Caco-2 (cell line): ENCODE measurements at regions of chr11 and their contacts with region 1.

Region 1: GRCh38 chr11:86802601-86803051 is 2.3 kb downstream of the PRSS23 start:
- DNase-seq: peak; percentile 80
- H3K4me3 ChIP-seq: peak overlapping the region; percentile 89
- H3K4me3 Mint-ChIP-seq: peak overlapping the region; percentile 95
- H3K27ac Mint-ChIP-seq: peak overlapping the region; percentile 99
- H3K4me1 ChIP-seq: peaks cover 81% of the 10 kb centered on the region
- H3K4me1 Mint-ChIP-seq: peaks cover 71% of the 10 kb centered on the region
- H3K27me3 ChIP-seq: no peaks in the 10 kb centered on the region
- H3K27me3 Mint-ChIP-seq: no peaks in the 10 kb centered on the region
- CTCF ChIP-seq: peak; percentile 80 to 92

Region 2: DNA sequence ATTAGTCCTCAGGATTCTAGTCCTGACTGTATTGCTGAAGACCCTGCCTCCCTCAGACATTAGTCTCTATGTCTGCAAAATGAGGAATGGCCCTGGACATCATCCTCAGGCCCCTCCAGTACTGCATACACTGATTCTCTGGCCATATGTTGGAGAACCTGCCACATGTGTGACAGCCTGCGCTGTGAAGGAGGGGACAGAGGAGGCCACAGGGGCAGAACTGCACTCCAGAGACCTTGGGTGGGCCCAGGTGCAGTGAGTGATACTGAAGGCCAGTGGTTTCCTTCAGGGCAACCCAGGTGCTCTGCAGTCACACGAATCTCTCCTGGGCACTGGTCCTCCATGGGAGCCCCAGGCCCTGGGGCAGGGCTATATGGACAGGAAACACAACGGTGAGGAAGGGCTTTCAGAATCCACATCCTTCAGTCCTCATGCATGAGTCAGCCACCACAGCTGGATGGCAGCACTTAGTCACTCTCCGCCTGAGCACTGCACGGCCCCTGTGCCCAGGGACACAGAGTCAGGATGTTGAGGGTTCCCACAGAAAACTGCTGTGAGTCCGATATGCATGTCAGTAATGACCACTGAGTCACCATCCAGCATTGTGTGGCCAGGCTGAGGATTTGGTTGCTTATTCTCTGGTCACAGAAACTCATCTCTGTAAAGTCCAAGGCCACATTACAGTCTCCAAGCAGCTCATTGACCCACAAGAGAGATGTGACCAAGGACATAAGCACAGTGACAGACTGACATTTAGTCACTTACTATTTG is 169.9 kb before region 1 on chr11:
- CTCF ChIA-PET with region 1: no interaction called
- POLR2A ChIA-PET with region 1: no interaction called
- intact Hi-C with region 1: loop called (anchors 1 kb)
- DNase-seq: peak; percentile 60 to 69
- H3K4me3 ChIP-seq: no peak overlapping the region
- H3K4me3 Mint-ChIP-seq: no peak overlapping the region
- H3K27ac Mint-ChIP-seq: no peak overlapping the region
- H3K4me1 ChIP-seq: peaks cover 10% of the 10 kb centered on the region
- H3K4me1 Mint-ChIP-seq: no peaks in the 10 kb centered on the region
- H3K27me3 ChIP-seq: no peaks in the 10 kb centered on the region
- H3K27me3 Mint-ChIP-seq: no peaks in the 10 kb centered on the region
- CTCF ChIP-seq: peak; percentile 26 to 51

Region 3: DNA sequence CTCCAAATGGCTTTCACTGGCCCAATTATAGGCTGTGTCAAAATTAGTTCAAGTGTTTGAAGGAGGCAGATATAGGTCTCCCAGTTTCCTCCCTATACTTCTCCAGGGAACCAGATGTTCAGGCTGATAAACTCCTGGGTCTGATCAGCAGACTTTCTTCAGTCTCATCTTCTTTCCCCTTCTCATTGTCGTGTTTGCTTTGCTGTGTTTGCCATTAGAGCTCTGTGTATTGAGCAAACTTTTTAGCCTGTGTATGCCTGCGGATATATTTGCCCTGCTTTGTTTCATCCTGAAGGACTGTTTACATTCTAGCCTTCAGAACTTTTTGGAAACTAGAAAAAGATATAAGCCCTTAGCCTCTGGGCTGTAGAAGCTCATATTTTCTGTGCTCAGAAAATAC is 96.3 kb before region 1 on chr11:
- CTCF ChIA-PET with region 1: interaction called, 9 read pairs
- POLR2A ChIA-PET with region 1: interaction called, 6 read pairs
- intact Hi-C with region 1: loop called (anchors 1 kb)
- DNase-seq: peak; percentile 70 to 74
- H3K4me3 ChIP-seq: no peak overlapping the region
- H3K4me3 Mint-ChIP-seq: no peak overlapping the region
- H3K27ac Mint-ChIP-seq: peak overlapping the region; percentile 2
- H3K4me1 ChIP-seq: peaks cover 37% of the 10 kb centered on the region
- H3K4me1 Mint-ChIP-seq: peaks cover 45% of the 10 kb centered on the region
- H3K27me3 ChIP-seq: no peaks in the 10 kb centered on the region
- H3K27me3 Mint-ChIP-seq: no peaks in the 10 kb centered on the region
- CTCF ChIP-seq: no peak

Region 4: DNA sequence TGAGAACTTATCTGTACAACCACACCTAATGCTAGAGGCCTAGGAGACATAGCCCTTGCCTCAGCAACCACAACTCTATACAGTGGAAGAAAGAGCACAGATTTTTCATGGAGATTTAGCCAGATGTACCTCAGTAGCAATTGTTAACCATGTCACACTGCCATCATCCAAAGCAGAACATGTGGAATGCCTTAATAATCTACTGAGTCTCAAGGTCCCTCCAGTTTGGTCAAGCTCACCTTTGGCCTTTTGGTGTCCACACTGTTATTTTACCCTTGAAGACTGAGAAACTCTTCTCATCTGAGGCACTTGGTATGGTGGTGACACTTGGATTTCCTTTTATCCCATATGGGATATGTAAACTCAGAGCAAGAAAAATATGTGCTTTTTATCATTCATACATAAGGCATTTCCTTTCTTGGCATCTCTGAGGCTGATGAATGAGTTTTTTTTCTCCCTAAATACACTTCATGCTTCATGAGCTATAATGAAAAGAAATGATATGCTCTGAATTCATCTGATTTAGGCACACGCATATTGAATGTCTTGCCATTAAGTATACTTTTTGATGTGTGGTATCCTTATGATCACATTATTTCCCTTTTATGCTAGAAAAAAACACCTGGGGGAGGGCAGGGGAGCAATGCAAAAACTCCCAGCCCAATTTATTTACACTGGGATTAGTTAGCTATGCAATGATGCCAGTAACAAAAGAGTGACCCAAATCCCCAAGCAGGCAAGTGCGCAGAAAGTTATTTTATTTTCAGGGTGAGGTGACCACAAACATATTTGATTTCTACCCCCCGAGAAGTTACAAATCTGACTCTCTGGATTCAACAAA is 66.9 kb before region 1 on chr11:
- CTCF ChIA-PET with region 1: interaction called, 3 read pairs
- POLR2A ChIA-PET with region 1: interaction called, 10 read pairs
- intact Hi-C with region 1: loop called (anchors 2 kb)
- DNase-seq: peak in 1 of 2 experiments; percentile 65
- H3K4me3 ChIP-seq: no peak overlapping the region
- H3K4me3 Mint-ChIP-seq: peak overlapping the region; percentile 45
- H3K27ac Mint-ChIP-seq: peak overlapping the region; percentile 95
- H3K4me1 ChIP-seq: peaks cover 72% of the 10 kb centered on the region
- H3K4me1 Mint-ChIP-seq: peaks cover 62% of the 10 kb centered on the region
- H3K27me3 ChIP-seq: no peaks in the 10 kb centered on the region
- H3K27me3 Mint-ChIP-seq: no peaks in the 10 kb centered on the region
- CTCF ChIP-seq: no peak

Region 5: DNA sequence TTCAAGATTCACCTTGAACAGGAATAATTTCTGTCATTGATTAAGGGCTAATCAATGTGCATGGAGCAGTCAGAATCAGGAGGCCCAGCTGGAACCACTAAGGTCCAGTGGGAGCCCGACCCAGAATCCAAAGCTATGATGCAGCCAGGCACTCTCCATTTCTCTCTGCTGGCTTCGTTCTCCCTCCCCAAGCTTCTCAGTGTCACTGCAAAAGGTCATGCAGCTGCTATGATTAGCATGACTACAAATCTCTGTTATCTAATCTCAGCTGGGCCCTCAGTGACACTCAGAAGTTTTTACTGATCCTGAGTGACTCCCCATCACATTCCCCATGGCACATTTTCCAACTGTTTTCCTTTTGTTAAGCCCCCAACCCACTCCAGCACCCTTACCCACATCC is 33.4 kb before region 1 on chr11:
- CTCF ChIA-PET with region 1: interaction called, 3 read pairs
- POLR2A ChIA-PET with region 1: no interaction called
- intact Hi-C with region 1: loop called (anchors 1 kb)
- DNase-seq: peak; percentile 55 to 62
- H3K4me3 ChIP-seq: no peak overlapping the region
- H3K4me3 Mint-ChIP-seq: peak overlapping the region; percentile 1
- H3K27ac Mint-ChIP-seq: peak overlapping the region; percentile 48
- H3K4me1 ChIP-seq: peaks cover 47% of the 10 kb centered on the region
- H3K4me1 Mint-ChIP-seq: peaks cover 44% of the 10 kb centered on the region
- H3K27me3 ChIP-seq: no peaks in the 10 kb centered on the region
- H3K27me3 Mint-ChIP-seq: no peaks in the 10 kb centered on the region
- CTCF ChIP-seq: no peak

Region 6: DNA sequence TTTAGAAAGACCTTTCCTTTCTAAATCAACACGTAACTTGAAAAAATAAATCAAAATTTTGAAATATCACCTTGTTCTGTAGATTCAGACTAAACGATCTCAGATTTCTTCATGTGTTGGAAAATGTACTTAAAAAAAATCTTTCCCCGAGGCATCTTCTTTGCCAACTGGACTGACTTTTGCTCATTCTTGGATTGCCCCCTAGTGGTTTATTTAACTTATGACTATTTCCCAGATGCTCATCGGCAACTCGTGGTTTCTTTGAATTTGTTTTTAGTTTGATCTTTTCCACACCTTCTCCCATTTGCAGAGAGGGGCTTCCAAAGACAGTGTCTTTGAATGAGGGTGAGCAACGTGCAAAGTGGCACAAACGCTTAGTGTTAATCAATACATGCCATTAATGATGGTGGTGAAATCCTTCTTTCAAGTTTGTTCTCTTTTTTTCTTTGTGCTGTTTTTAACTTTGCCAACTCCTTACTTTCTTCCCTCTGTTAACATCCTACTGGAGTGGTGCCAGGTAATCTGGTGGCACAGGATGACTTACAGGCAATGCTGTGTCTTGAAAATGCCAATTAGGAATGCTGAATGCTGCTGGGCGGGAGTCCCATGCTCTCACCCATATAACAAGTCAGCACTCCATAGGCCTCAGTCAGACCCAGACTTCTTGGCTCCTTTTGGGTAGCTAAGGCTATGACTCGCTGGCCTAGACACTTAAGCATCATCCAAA is 16.0 kb after region 1 on chr11:
- CTCF ChIA-PET with region 1: interaction called, 3 read pairs
- POLR2A ChIA-PET with region 1: no interaction called
- intact Hi-C with region 1: loop called (anchors 1 kb)
- DNase-seq: peak in 1 of 2 experiments; percentile 74
- H3K4me3 ChIP-seq: no peak overlapping the region
- H3K4me3 Mint-ChIP-seq: no peak overlapping the region
- H3K27ac Mint-ChIP-seq: peak overlapping the region; percentile 23
- H3K4me1 ChIP-seq: peaks cover 52% of the 10 kb centered on the region
- H3K4me1 Mint-ChIP-seq: peaks cover 41% of the 10 kb centered on the region
- H3K27me3 ChIP-seq: no peaks in the 10 kb centered on the region
- H3K27me3 Mint-ChIP-seq: no peaks in the 10 kb centered on the region
- CTCF ChIP-seq: peak; percentile 83 to 95